ENCODE measurements at regions of chr10 and their contacts with region 1.

Region 1: GRCh38 chr10:124388823-124389612 is 29.7 kb downstream of the OAT start:
- DNase-seq: peak; percentile 92 to 98
- ATAC-seq: peak; percentile 95
- H3K4me3 ChIP-seq: no peak overlapping the region
- H3K27ac ChIP-seq: no peak overlapping the region
- H3K4me1 ChIP-seq: peaks cover 0 to 3% of the 10 kb centered on the region in 2 donors
- H3K27me3 ChIP-seq: no peaks in the 10 kb centered on the region

Region 2: DNA sequence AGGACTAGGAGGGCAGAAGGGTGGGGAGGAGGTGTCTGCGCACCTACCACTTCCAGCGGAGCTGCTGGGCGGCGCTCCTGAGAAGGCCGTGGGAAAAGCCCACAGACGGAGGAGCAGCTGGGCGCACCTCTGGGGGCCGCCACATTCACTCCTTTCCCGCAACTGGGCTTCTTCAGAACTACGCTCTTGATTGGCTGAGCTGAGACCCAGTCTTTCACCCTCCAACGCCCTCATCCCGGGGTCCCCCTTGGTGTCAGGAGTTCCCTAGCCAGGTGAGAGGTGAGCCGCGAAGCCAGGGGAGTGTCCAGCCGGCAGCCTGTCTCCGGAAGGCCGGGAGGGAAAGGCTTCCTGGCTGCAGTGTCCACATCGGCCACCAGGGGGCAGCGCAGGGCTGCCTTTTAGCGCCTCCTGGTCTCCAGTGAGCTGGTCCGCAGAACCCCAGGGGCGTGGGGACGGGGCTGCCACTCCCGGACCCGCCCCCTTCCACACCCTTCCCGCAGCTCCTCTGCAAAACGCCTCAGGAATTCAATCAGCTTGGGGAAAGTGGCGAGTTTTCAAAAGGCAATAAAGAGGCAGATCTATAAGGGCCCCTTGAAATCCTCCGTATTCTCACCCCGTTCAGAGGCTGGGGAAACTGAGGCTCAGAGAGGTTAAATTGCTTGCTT is 394.5 kb before region 1 on chr10:
- intact Hi-C with region 1: loop called (anchors 1 kb)
- DNase-seq: peak; percentile 91 to 96
- ATAC-seq: peak; percentile 93
- H3K4me3 ChIP-seq: no peak overlapping the region
- H3K27ac ChIP-seq: no peak overlapping the region
- H3K4me1 ChIP-seq: no peaks in the 10 kb centered on the region
- H3K27me3 ChIP-seq: peaks cover 0 to 3% of the 10 kb centered on the region in 2 donors

Region 3: DNA sequence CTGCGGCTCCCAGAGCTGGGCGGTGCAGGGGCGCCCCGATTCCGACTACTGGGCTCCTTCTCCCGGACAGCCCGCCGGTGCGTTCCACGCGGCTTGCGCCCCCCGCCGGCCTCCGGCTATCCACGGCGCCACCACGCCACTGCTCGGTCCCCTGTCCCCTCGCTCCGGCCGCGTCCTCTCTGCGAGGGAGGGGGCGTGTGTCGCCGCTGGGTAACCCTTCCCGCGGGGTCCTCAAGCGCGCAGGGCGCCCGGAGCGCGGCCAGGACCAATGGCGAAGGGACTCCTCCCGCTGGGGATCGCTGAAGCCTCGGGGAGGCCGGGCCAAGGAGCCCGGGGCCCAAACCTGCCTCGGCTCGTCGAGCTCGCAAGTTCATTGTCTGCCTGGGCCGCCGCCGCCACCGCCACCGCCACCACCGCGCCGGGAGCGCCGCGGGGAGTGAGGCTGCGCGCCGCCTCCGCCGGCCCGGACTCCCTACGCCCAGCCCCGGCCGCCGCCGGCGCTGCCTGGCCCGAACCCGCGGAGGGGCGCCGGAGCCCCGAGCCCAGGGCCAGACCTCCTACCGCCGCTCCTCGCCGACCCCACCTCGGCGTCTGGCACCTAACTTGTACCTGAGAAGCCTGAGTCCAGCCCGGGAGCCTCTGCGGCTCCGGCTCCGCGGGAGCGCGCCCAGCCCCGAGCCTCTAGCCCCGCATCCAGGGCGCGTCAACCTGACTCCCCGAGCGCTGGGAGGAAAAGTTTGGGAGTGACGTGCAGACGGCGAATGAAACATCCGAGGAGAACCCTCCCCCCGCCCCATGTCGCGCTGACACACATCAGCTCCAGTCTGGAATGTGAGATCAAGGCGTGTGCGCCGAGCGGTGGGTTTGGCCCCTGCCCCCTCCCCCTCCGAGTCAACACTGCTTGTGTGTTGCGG is 295.9 kb before region 1 on chr10 and contains the start of gene CHST15:
- intact Hi-C with region 1: loop called in 1 of 2 experiments (anchors 10 kb)
- DNase-seq: peak; percentile 68 to 87
- ATAC-seq: peak; percentile 39
- H3K4me3 ChIP-seq: peak within 1 kb of the TSS; percentile 62 to 81
- H3K27ac ChIP-seq: peak within 1 kb of the TSS in 1 of 2 donors; percentile 85
- H3K4me1 ChIP-seq: no peaks in the 10 kb centered on the region
- H3K27me3 ChIP-seq: no peaks in the 10 kb centered on the region
- total RNA-seq, gene CHST15: 39.9 to 43.8 TPM

Region 4: GRCh38 chr10:124267231-124267885 is 121.7 kb before region 1 on chr10:
- intact Hi-C with region 1: loop called (anchors 5 to 10 kb)
- DNase-seq: peak; percentile 78 to 79
- ATAC-seq: peak; percentile 49
- H3K4me3 ChIP-seq: no peak overlapping the region
- H3K27ac ChIP-seq: no peak overlapping the region
- H3K4me1 ChIP-seq: no peaks in the 10 kb centered on the region
- H3K27me3 ChIP-seq: no peaks in the 10 kb centered on the region

Region 5: GRCh38 chr10:124378881-124379471 is 10.0 kb before region 1 on chr10:
- intact Hi-C with region 1: no loop called
- DNase-seq: peak in 1 of 2 donors; percentile 76
- ATAC-seq: peak; percentile 37
- H3K4me3 ChIP-seq: no peak overlapping the region
- H3K27ac ChIP-seq: no peak overlapping the region
- H3K4me1 ChIP-seq: no peaks in the 10 kb centered on the region
- H3K27me3 ChIP-seq: no peaks in the 10 kb centered on the region

Measured in aorta (tissue), 5 donors.